Activated CD8-positive, alpha-beta T cell treated with anti-CD3 and anti-CD28 coated beads, Interleukin-2, amount 10 ng/mL, durations not matched to agents 7 days and 5 days (primary cell): ENCODE measurements at regions of chr12 and their contacts with region 1.

Region 1: GRCh38 chr12:111444925-111445725 is 39.4 kb downstream of the SH2B3 start:
- DNase-seq: peak; percentile 92
- ATAC-seq: peak; percentile 96
- H3K4me3 Mint-ChIP-seq: peak overlapping the region; percentile 67
- H3K27ac Mint-ChIP-seq: peak overlapping the region; percentile 93
- H3K4me1 Mint-ChIP-seq: peaks cover 94% of the 10 kb centered on the region
- H3K27me3 Mint-ChIP-seq: no peaks in the 10 kb centered on the region

Region 2: GRCh38 chr12:111384596-111384995 is 60.5 kb before region 1 on chr12:
- CTCF ChIA-PET with region 1: no interaction called
- POLR2A ChIA-PET with region 1: no interaction called
- DNase-seq: no peak
- ATAC-seq: no peak
- H3K4me3 Mint-ChIP-seq: no peak overlapping the region
- H3K27ac Mint-ChIP-seq: no peak overlapping the region
- H3K4me1 Mint-ChIP-seq: no peaks in the 10 kb centered on the region
- H3K27me3 Mint-ChIP-seq: peaks cover 6% of the 10 kb centered on the region

Region 3: DNA sequence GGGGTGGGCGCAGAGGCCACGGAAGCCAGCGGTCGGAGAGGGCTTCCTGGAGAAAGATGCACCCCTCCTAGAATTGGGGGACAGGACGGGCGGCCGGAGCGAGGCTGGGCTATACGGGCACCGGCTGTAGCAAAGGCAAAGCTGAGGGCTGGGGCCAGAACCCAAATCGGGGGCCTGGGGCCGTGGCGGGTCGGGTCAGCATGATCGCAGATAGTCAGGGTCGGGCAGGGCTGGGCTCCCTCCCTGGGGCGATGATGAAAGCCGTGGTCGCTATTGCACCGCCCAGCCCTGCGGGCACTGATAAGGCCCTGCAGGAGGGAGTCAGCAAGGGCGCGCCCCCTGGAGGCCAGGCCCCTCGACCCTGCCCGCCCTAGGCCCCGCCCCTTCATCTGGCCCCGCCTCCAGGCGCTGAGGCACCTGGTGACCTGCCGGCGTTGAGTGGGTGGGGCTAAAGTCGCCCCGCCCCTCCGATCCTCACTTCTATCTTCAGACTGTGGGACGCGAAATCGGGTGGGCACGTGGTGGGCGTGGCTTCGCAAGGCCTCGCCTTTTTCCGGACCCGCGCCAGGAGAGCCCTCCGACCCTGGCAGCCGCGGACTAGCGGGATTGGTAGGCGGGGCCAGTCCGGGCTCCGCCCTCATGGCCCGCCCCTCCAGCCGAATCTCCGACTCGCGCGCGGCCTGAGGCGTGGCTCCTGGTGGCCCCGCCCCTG is 39.8 kb before region 1 on chr12:
- CTCF ChIA-PET with region 1: interaction called, 1,088 read pairs
- POLR2A ChIA-PET with region 1: interaction called, 15 read pairs
- DNase-seq: peak; percentile 100
- ATAC-seq: peak; percentile 75
- H3K4me3 Mint-ChIP-seq: peak overlapping the region; percentile 76
- H3K27ac Mint-ChIP-seq: peak overlapping the region; percentile 90
- H3K4me1 Mint-ChIP-seq: peaks cover 51% of the 10 kb centered on the region
- H3K27me3 Mint-ChIP-seq: no peaks in the 10 kb centered on the region

Region 4: GRCh38 chr12:111424793-111425251 is 20.3 kb before region 1 on chr12:
- CTCF ChIA-PET with region 1: interaction called, 170 read pairs
- POLR2A ChIA-PET with region 1: interaction called, 52 read pairs
- DNase-seq: no peak
- ATAC-seq: no peak
- H3K4me3 Mint-ChIP-seq: no peak overlapping the region
- H3K27ac Mint-ChIP-seq: peak overlapping the region; percentile 92
- H3K4me1 Mint-ChIP-seq: peaks cover 74% of the 10 kb centered on the region
- H3K27me3 Mint-ChIP-seq: no peaks in the 10 kb centered on the region

Region 5: GRCh38 chr12:111434680-111435338 is 10.3 kb before region 1 on chr12:
- CTCF ChIA-PET with region 1: interaction called, 170 read pairs
- POLR2A ChIA-PET with region 1: interaction called, 57 read pairs
- DNase-seq: peak; percentile 89
- ATAC-seq: peak; percentile 66
- H3K4me3 Mint-ChIP-seq: peak overlapping the region; percentile 75
- H3K27ac Mint-ChIP-seq: peak overlapping the region; percentile 99
- H3K4me1 Mint-ChIP-seq: peaks cover 97% of the 10 kb centered on the region
- H3K27me3 Mint-ChIP-seq: no peaks in the 10 kb centered on the region